Endothelial cell of umbilical vein (primary cell): ENCODE measurements at regions of chr4 and their contacts with region 1.

Region 1: DNA sequence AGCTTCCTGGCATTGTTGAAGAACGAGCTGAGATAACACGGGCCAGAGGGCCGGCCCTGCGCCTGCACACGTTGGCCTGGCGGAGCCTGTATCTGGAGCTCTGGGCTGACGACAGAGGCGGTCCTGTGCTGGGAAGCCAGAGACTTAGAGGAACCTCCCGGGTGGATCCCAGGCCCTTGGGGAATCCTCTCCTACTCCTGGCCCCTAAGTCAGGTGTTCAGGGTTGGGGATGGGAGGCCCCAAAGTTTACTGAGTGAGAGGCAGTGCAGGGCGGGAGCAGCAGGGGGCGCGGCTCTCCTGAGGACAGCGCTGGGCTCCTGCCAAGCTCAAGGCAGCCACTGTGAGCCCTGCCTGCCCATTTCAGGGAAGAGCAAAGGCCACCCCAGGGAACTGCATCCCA is 2.5 kb upstream of the HTRA3 start:
- DNase-seq: peak; percentile 72
- H3K4me3 ChIP-seq: no peak overlapping the region
- H3K27ac ChIP-seq: no peak overlapping the region
- H3K4me1 ChIP-seq: peaks cover 11% of the 10 kb centered on the region
- H3K27me3 ChIP-seq: no peaks in the 10 kb centered on the region
- CTCF ChIP-seq: peak; percentile 90 to 94
- POLR2A ChIP-seq: no peak

Region 2: GRCh38 chr4:8342651-8343261 is 75.7 kb after region 1 on chr4:
- CTCF ChIA-PET with region 1: interaction called, 11 read pairs
- POLR2A ChIA-PET with region 1: no interaction called
- dilution Hi-C with region 1: no loop called
- intact Hi-C with region 1: loop called (anchors 2 kb)
- DNase-seq: no peak
- H3K4me3 ChIP-seq: no peak overlapping the region
- H3K27ac ChIP-seq: no peak overlapping the region
- H3K4me1 ChIP-seq: no peaks in the 10 kb centered on the region
- H3K27me3 ChIP-seq: peaks cover 3 to 7% of the 10 kb centered on the region in 2 experiments
- CTCF ChIP-seq: peak in 1 of 2 donors; percentile 39
- POLR2A ChIP-seq: no peak

Region 3: DNA sequence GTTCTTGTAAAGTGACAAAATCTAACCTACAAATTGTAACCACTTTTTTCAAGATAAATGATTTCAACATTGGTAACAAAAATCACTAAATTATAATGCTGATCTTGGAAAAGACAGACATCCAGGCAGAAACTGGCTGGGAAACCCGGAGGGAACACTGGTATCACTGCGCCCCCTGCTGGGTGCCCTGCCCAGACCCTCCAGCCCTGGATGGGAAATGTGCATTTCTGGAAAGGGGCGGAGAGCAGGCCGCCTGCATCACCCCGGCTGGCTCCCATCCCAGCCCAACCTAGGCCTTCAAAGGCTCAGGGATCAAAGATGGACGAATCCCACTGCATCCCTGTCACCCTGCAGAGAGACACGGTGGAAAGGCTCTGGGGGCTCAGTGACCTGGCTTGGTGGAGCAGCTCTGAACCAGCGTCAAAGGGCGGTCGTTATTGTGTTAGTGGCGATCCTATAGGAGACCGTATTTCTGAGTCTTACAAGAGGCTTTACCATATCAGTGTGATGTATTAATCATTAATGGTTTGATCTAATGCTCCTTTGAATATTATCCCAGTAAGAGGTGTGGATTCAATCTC is 136.2 kb after region 1 on chr4:
- CTCF ChIA-PET with region 1: interaction called, 242 read pairs
- POLR2A ChIA-PET with region 1: interaction called, 3 read pairs
- dilution Hi-C with region 1: no loop called
- intact Hi-C with region 1: loop called (anchors 1 kb)
- DNase-seq: peak; percentile 80
- H3K4me3 ChIP-seq: no peak overlapping the region
- H3K27ac ChIP-seq: peak overlapping the region; percentile 26
- H3K4me1 ChIP-seq: peaks cover 11% of the 10 kb centered on the region
- H3K27me3 ChIP-seq: no peaks in the 10 kb centered on the region
- CTCF ChIP-seq: peak; percentile 91 to 95
- POLR2A ChIP-seq: no peak

Region 4: DNA sequence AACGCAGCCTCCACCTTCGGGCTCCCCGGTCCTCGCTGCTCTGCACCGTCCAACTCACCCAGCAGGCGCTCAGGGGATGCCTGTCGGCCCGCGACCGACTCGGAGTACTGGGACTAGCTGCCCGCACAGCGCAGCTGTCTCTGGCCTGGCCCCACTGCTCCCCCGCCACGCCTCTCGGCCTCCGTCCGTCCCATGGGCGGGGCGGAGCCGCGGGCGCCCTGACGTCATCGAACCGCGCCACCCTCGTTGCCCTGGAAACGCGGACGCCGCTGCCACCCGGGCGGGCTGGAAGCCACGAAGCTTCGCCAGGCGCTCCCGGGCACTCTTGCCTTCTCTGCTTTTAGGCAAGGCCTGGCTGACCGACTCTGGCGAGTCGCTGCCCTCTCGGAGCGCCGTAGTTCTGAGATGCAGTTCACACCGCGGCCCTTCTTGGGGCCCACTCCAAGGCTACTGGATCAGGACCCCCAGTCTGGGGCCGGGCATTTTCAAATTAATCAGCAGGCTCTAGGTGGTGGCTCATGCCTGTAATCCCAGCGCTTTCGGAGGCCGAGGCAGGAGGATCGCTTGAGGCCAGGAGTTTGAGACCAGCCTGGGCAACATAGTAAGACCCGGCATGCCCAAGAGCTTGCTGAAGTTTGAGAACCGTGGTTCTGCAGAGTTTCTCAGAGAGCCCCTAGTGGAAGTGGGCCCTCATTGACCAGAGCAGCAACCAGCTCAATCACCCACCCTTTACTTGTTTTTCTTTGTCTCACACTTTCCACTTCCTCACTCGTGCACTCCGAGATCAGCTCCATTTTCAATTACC is 161.4 kb after region 1 on chr4:
- CTCF ChIA-PET with region 1: interaction called, 10 read pairs
- POLR2A ChIA-PET with region 1: no interaction called
- dilution Hi-C with region 1: no loop called
- intact Hi-C with region 1: no loop called
- DNase-seq: peak; percentile 85
- H3K4me3 ChIP-seq: peak overlapping the region; percentile 35 to 80 (median 67)
- H3K27ac ChIP-seq: peak overlapping the region; percentile 78
- H3K4me1 ChIP-seq: peaks cover 13% of the 10 kb centered on the region
- H3K27me3 ChIP-seq: no peaks in the 10 kb centered on the region
- CTCF ChIP-seq: peak; percentile 40 to 77
- POLR2A ChIP-seq: peak; percentile 76

Region 5: GRCh38 chr4:8440492-8441341 is 173.6 kb after region 1 on chr4 and contains the starts of genes ACOX3 and TRMT44:
- CTCF ChIA-PET with region 1: no interaction called
- POLR2A ChIA-PET with region 1: no interaction called
- dilution Hi-C with region 1: no loop called
- intact Hi-C with region 1: no loop called
- DNase-seq: peak; percentile 96
- H3K4me3 ChIP-seq: peak within 1 kb of the TSS; percentile 71 to 97 (median 72)
- H3K27ac ChIP-seq: peak within 1 kb of the TSS; percentile 91
- H3K4me1 ChIP-seq: peaks cover 44% of the 10 kb centered on the region
- H3K27me3 ChIP-seq: no peaks in the 10 kb centered on the region
- CTCF ChIP-seq: no peak
- POLR2A ChIP-seq: peak; percentile 77
- total RNA-seq, gene ACOX3: 25.6 and 26.3 TPM in 2 replicates
- total RNA-seq, gene TRMT44: 17.3 and 20.7 TPM in 2 replicates